MCF 10A (cell line): ENCODE measurements at regions of chr15 and their contacts with region 1.

Region 1: DNA sequence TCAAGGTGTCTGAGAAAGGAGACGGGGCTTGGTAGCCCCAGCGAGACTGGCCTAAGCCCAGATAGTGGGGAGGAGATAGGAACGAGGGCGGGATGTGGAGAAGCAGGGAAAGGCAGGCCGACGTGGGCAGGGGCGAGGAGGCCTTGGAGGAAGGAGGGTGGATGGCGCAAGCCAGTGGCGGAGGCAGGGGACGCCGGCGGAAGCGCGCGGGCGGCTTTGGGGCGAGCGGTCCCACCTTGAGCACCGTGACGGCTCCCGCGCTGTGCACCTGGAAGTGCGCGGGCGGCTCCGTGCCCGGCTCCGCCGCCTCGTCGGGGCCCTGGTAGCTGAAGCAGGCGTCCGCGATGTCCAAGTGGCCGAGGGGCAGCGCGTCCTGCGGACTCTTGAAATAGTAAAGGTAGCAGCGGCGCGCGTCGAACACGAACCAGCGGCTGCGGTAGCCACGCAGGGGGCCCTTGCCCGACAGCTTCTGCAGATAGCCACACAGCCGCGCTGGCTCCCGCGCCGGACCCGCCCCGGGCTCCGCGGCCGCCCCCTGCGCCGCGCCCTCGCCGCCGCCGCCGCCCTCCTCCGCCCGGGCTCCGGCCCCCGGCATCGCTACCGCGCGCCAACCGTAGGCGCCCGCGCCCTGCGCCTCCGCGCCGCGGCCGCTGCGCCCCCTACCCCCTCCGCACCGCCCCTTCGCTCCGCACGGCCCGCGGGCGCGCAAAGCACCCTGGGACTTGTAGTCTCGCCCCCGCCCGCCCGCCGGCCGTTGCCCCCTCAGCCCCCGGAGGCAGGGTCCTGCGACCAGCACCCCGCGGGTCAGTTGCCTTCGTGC is at the start of gene TBC1D2B:
- DNase-seq: peak; percentile 41
- H3K4me3 Mint-ChIP-seq: peak within 1 kb of the TSS; percentile 92
- H3K27ac Mint-ChIP-seq: peak within 1 kb of the TSS; percentile 67
- H3K4me1 Mint-ChIP-seq: peaks cover 25% of the 10 kb centered on the region
- H3K27me3 Mint-ChIP-seq: no peaks in the 10 kb centered on the region
- CTCF ChIP-seq: no peak
- total RNA-seq, gene TBC1D2B: 21.2 and 21.6 TPM in 2 replicates

Region 2: DNA sequence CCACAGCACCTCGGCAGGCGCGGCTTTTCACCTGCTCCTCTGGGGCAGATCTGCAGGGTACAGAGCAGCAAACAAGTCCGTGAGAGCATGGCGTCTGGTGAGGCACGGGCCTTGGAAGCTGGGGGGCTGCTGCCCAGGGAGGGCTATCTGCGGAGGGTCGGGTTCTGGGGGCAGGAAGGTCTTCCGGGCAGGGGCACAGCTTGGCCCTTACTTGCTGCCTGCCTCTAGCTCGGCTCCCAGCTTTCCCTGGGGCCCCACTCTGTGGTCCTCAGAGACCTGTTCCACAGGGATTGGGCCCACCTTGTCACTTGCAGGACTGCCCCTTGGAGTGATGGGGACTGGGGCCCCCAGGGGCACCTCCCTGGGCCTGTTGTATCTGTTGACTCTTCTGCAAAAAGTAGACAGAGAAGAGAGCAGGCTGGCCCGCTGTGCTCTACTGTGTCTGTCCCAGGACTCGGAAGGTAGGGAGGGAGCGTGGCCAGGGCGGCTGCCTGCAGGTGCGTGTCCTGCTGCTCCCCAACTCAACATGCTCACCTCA is 83.8 kb before region 1 on chr15:
- CTCF ChIA-PET with region 1: no interaction called
- POLR2A ChIA-PET with region 1: interaction called, 12 read pairs
- intact Hi-C with region 1: no loop called
- DNase-seq: no peak
- H3K4me3 Mint-ChIP-seq: no peak overlapping the region
- H3K27ac Mint-ChIP-seq: peak overlapping the region; percentile 90
- H3K4me1 Mint-ChIP-seq: peaks cover 26% of the 10 kb centered on the region
- H3K27me3 Mint-ChIP-seq: no peaks in the 10 kb centered on the region
- CTCF ChIP-seq: no peak

Region 3: DNA sequence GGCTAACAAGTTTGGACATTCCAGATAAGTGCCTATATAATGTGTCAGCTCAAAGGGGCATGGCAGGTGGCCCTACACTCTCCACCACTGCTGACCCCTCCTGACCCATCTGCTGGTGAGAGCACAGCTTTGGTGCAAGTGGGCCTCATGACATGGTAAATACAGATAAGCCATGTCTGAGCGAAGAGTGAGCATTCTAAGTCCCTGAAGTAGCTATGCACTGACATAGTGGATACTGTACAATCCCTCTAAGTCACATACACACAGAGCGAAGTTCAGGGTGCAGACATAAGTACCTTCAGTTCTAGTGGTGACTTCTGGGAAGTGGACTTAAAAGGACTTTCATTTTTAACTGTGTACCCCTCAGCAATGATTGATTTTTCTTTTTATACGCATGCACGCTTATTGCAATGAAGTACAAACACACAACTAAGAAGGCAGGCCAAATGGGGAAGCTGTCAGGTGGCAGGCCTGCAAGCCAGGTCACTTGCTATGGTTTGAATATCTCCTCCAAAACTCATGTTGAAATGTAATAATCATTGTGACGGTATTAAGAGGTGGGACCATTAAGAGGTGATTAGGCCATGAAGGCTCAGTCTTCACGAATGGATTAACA is 41.3 kb before region 1 on chr15:
- CTCF ChIA-PET with region 1: no interaction called
- POLR2A ChIA-PET with region 1: no interaction called
- intact Hi-C with region 1: no loop called
- DNase-seq: no peak
- H3K4me3 Mint-ChIP-seq: no peak overlapping the region
- H3K27ac Mint-ChIP-seq: no peak overlapping the region
- H3K4me1 Mint-ChIP-seq: peaks cover 23% of the 10 kb centered on the region
- H3K27me3 Mint-ChIP-seq: no peaks in the 10 kb centered on the region
- CTCF ChIP-seq: no peak

Region 4: DNA sequence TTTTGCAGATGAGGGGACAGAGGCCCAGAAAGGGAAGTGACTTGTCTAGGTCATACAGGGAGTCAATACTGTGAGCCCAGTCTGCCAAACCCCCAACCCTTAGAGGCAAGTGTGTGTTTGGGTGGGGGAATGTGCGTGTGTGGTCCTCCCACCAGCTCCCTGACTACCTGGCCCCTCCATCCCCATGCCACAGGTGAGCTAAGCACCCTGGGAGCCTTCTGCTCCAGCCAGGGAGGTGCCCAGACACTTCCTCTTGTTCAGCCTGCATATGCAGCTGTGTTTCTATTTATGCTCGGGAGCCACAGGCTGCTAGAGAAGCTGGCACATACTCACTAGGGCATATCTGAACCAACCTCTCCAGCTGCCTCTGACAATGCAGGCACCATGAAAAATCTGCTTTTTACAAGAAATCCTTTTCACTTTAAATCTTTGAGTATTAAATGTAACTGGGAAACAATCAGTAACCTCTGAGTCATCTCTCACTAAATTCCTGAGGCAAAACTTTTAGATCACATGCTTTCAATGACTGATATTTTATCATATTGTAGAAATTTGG is 20.5 kb before region 1 on chr15:
- CTCF ChIA-PET with region 1: interaction called, 5 read pairs
- POLR2A ChIA-PET with region 1: interaction called, 14 read pairs
- intact Hi-C with region 1: no loop called
- DNase-seq: no peak
- H3K4me3 Mint-ChIP-seq: no peak overlapping the region
- H3K27ac Mint-ChIP-seq: peak overlapping the region; percentile 95
- H3K4me1 Mint-ChIP-seq: peaks cover 32% of the 10 kb centered on the region
- H3K27me3 Mint-ChIP-seq: no peaks in the 10 kb centered on the region
- CTCF ChIP-seq: no peak

Region 5: GRCh38 chr15:78065284-78065872 is 11.9 kb before region 1 on chr15:
- CTCF ChIA-PET with region 1: interaction called, 3 read pairs
- POLR2A ChIA-PET with region 1: interaction called, 25 read pairs
- intact Hi-C with region 1: no loop called
- DNase-seq: peak; percentile 95
- H3K4me3 Mint-ChIP-seq: no peak overlapping the region
- H3K27ac Mint-ChIP-seq: no peak overlapping the region
- H3K4me1 Mint-ChIP-seq: peaks cover 39% of the 10 kb centered on the region
- H3K27me3 Mint-ChIP-seq: no peaks in the 10 kb centered on the region
- CTCF ChIP-seq: no peak